CD8-positive, alpha-beta T cell (primary cell): ENCODE measurements at regions of chr6 and their contacts with region 1.

Region 1: DNA sequence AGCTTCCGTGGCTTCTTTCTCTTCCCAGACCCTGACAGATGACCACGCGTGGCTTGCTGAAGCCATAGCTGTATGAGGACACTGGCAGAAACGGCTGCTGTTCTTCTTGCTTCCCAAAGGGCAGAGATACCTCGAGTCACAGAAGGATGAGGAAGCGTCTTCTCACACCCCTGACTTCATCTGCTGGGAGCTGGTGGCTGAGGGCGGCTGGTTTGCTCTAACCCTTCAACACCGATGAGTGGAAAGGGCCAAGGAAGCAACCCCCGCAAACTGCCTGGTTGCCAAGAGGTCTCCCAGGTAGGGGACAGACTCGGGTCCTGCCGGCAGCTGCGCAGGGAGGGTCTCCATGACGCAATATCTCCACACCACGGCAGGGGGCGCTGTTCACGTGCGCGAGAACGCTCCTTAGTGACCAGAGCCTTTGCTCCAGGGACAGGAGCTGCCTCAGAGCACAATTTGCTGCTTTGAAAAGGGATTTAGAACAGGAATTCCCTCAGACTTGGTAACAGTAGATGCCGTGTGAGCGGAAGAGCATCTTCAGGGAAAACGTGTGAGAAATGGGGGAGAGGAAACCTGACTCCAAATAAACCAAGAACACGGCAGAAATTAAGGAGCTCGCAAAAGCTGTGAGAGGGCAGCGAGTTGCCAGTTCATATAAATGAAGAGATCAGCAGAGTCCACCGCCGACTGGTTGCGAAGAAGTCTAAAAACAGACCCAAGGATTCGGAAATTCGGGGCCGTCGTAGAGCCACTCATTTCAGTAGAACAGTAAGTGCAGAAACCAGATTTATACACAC is 80.2 kb downstream of the ERMARD start:
- DNase-seq: peak; percentile 40 to 83 (median 74)
- ATAC-seq: peak; percentile 63
- H3K4me3 ChIP-seq: no peak overlapping the region
- H3K4me3 Mint-ChIP-seq: no peak overlapping the region
- H3K27ac ChIP-seq: no peak overlapping the region
- H3K27ac Mint-ChIP-seq: no peak overlapping the region
- H3K4me1 ChIP-seq: no peaks in the 10 kb centered on the region
- H3K4me1 Mint-ChIP-seq: peaks cover 2% of the 10 kb centered on the region
- H3K27me3 ChIP-seq: peaks cover 0 to 11% of the 10 kb centered on the region in 2 experiments
- H3K27me3 Mint-ChIP-seq: peaks cover 44% of the 10 kb centered on the region
- CTCF ChIP-seq: peak; percentile 96

Region 2: DNA sequence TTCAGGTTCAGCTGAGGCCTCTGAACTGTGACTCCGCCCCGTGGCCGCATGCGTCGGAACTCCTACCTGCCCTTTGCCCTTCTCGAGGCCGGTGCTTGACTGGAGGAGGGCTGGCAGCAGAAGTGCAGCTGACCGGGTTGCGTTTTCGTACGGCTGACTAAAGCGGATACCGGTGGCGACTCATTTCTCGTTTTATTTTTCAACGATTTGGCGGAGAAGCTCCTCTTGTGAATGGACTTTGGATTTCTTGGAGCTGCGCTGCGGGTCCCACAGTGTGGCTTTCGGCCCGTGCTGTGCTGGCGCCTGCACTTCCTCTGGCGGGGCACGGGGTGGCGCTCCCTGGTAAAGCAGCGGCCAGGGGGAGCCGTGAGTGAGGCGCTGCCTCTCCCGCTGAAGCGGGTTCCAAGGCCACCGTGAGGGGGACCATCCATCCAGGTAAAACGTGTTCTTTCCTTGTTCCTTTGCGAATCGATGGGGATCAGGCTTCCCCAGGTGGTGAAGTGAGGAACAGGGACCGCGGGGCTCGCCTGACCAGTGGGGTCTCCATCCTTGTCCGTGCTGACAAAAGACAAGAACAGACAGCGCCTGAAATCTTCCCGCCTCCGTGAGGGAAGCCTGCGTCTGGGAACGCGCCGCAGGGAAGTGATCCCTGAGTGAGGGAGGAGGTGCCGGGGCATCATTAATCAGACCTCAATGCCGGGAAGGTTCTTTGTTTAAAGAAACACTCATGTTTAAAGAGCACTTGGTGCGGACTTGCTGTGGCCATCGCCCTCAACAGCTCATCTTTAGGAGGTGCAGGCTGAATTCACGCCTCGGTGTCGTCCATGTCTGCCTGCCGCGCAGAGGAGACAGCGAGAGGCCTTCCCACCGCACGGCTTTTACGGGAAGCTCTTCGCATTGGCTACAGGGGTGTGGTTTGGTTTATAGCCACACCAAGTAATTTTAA is 41.4 kb before region 1 on chr6:
- CTCF ChIA-PET with region 1: interaction called, 27 read pairs
- POLR2A ChIA-PET with region 1: interaction called, 3 read pairs
- intact Hi-C with region 1: loop called (anchors 1 kb)
- DNase-seq: peak; percentile 57 to 84 (median 73)
- ATAC-seq: peak; percentile 98
- H3K4me3 ChIP-seq: peak overlapping the region; percentile 46 to 58
- H3K4me3 Mint-ChIP-seq: peak overlapping the region; percentile 86
- H3K27ac ChIP-seq: no peak overlapping the region
- H3K27ac Mint-ChIP-seq: no peak overlapping the region
- H3K4me1 ChIP-seq: peaks cover 8% of the 10 kb centered on the region
- H3K4me1 Mint-ChIP-seq: peaks cover 16% of the 10 kb centered on the region
- H3K27me3 ChIP-seq: peaks cover 0 to 6% of the 10 kb centered on the region in 2 experiments
- H3K27me3 Mint-ChIP-seq: peaks cover 38% of the 10 kb centered on the region
- CTCF ChIP-seq: peak; percentile 93

Region 3: DNA sequence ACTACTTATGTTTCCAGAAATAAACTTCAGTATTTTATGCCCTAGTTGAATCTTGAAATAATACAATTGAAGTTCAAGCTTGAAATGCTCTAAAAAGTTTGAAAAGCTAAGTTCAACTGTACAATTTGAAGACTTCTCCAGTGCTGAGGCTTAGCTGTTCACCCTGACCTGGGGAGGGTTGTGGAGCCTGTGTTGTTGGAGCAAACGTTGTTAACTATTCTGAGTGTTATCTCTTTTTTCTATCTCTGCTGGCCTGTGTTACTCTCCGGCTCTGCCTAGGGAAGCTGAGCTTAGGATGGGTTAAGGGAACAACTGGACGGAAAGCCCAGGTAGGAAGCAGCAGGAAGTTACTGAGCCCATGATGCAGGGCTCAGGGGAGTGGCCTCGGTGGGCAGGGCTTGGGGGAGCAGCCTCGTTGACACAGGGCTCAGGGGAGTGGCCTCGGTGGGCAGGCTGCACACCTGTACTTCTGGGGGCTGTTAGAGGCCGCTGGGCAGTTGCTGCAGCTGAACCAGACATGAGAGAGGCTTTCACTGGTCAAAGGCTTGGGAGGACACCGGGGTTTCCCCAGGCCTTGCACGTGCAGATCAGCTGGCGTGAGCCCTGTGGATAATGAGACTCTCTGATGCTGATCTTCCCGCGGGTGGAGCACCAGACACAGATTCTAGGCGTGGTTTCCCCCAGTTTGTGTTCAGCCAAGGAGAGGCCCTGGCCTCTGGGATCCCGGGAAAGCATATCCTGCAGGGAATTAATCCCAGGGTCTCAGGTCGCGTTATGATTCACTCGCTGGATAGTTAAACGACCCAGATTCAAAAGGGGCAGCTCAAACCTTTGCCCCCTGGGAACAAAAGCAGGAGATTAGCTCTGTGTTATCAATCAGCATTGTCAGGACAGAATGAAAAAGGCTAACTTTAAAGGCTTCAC is 21.3 kb before region 1 on chr6:
- CTCF ChIA-PET with region 1: interaction called, 10 read pairs
- POLR2A ChIA-PET with region 1: no interaction called
- intact Hi-C with region 1: no loop called
- DNase-seq: no peak
- ATAC-seq: no peak
- H3K4me3 ChIP-seq: no peak overlapping the region
- H3K4me3 Mint-ChIP-seq: no peak overlapping the region
- H3K27ac ChIP-seq: no peak overlapping the region
- H3K27ac Mint-ChIP-seq: no peak overlapping the region
- H3K4me1 ChIP-seq: peaks cover 46% of the 10 kb centered on the region
- H3K4me1 Mint-ChIP-seq: peaks cover 43% of the 10 kb centered on the region
- H3K27me3 ChIP-seq: peaks cover 0 to 7% of the 10 kb centered on the region in 2 experiments
- H3K27me3 Mint-ChIP-seq: peaks cover 29% of the 10 kb centered on the region
- CTCF ChIP-seq: no peak

Region 4: DNA sequence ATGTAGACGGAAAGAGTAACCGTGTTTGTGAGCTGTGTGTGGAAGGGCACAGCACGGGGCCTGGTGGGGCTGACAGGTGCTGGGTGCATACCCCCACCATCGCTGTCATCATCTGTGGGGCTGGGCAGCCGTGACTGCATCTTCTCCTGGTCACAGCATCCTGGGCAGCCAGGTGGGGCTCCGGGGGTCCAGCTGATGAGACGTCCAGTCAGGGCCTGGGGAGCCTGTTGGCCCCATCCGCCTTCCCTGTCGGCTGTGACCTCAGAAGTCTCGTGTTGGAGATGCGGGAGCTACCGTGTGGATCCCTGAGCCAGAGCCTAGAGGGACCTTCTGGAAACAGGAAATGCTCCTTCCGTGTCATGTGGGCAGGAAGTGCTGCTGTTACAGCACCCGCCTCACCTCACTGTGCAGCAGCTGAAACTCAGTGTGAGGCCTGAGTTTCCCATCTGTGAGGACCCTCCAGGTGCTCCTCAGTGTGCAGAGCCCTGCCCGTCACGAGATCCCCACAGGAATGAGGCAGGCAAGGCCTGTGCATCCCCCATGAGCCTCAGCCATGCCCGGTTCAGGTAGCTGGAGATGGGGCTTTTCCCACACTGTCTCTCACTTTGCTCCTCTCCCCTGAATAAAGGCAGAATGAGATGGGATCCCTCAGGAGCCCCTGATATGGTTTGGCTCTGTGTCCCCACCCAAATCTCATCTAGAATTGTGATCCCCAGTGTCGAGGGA is 28.5 kb after region 1 on chr6:
- CTCF ChIA-PET with region 1: interaction called, 14 read pairs
- POLR2A ChIA-PET with region 1: no interaction called
- intact Hi-C with region 1: no loop called
- DNase-seq: peak in 1 of 9 experiments; percentile 48
- ATAC-seq: no peak
- H3K4me3 ChIP-seq: no peak overlapping the region
- H3K4me3 Mint-ChIP-seq: peak overlapping the region; percentile 38
- H3K27ac ChIP-seq: no peak overlapping the region
- H3K27ac Mint-ChIP-seq: no peak overlapping the region
- H3K4me1 ChIP-seq: peaks cover 8% of the 10 kb centered on the region
- H3K4me1 Mint-ChIP-seq: peaks cover 40% of the 10 kb centered on the region
- H3K27me3 ChIP-seq: no peaks in the 10 kb centered on the region
- H3K27me3 Mint-ChIP-seq: no peaks in the 10 kb centered on the region
- CTCF ChIP-seq: no peak

Region 5: GRCh38 chr6:169950558-169950957 is 118.9 kb after region 1 on chr6:
- CTCF ChIA-PET with region 1: interaction called, 19 read pairs
- POLR2A ChIA-PET with region 1: no interaction called
- intact Hi-C with region 1: no loop called
- DNase-seq: peak in 7 of 9 experiments; percentile 16 to 69 (median 51)
- ATAC-seq: peak; percentile 40
- H3K4me3 ChIP-seq: no peak overlapping the region
- H3K4me3 Mint-ChIP-seq: no peak overlapping the region
- H3K27ac ChIP-seq: no peak overlapping the region
- H3K27ac Mint-ChIP-seq: no peak overlapping the region
- H3K4me1 ChIP-seq: no peaks in the 10 kb centered on the region
- H3K4me1 Mint-ChIP-seq: no peaks in the 10 kb centered on the region
- H3K27me3 ChIP-seq: no peaks in the 10 kb centered on the region
- H3K27me3 Mint-ChIP-seq: no peaks in the 10 kb centered on the region
- CTCF ChIP-seq: peak; percentile 53

Region 6: DNA sequence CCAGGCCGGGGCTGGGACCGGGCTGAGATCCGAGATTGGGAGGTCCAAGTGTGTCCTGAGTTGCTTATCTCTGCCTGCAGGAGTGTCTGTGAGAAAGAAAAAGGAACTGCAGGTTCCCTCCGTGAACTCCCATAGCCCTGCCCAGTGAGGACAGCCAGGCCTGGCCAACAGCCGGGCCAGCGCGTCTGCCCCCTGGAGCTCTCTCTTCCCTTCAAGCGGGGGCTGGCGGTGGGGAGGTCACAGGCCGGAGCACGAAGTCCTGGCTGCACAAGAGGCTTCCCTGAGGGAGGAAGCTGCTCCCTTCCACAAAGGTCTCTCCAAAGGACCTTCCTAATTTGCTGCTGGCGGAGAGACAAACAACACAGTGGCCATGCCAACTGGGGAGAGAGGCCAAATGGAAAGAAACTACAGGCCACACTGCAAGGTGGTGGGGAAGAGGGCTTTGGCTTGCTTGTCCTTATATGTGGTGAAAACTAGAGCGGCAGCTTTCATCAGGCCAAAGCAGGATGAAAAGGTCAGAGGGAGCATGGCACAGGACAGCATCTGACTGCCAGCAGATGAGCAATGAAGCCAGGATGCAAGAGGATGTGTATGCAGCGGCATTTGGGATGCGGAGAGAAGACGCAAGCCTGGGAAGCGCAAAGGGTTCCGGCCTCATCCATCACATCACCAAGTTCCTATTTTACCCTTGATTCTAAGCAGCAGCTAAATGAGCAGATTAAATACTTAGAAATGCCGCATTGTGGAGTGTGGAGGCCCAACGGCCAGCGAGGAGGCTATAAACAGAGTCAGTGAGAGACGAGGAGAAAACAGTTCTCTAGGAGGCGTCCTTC is 179.8 kb after region 1 on chr6:
- CTCF ChIA-PET with region 1: no interaction called
- POLR2A ChIA-PET with region 1: no interaction called
- intact Hi-C with region 1: no loop called
- DNase-seq: no peak
- ATAC-seq: no peak
- H3K4me3 ChIP-seq: no peak overlapping the region
- H3K4me3 Mint-ChIP-seq: no peak overlapping the region
- H3K27ac ChIP-seq: no peak overlapping the region
- H3K27ac Mint-ChIP-seq: no peak overlapping the region
- H3K4me1 ChIP-seq: no peaks in the 10 kb centered on the region
- H3K4me1 Mint-ChIP-seq: no peaks in the 10 kb centered on the region
- H3K27me3 ChIP-seq: no peaks in the 10 kb centered on the region
- H3K27me3 Mint-ChIP-seq: peaks cover 10% of the 10 kb centered on the region
- CTCF ChIP-seq: no peak

Region 7: DNA sequence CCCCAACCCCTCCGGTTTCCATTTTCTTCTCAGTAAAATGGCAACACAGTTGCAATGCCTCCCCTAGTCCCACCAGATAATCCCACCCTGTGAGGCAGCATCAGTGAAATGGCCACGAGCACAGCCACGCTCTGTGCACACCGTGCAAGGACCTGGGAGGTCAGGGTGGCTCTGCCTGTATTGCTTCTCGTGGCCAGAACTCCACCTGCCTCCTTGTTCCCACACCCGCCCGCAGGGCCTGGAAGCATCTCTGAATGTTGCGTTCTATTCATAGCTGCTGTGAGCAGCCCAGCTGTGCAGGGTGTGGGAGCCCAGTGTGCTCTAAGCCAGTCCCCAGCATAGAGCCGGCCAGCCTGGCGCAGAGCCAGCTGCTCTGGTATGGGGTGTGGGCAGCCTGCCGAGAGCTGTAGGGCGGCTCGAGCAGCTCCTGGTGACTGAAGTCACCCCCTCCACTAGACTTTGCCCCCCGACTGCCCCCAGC is 298.1 kb after region 1 on chr6:
- CTCF ChIA-PET with region 1: no interaction called
- POLR2A ChIA-PET with region 1: no interaction called
- intact Hi-C with region 1: no loop called
- DNase-seq: peak in 1 of 9 experiments; percentile 7
- ATAC-seq: no peak
- H3K4me3 ChIP-seq: no peak overlapping the region
- H3K4me3 Mint-ChIP-seq: no peak overlapping the region
- H3K27ac ChIP-seq: no peak overlapping the region
- H3K27ac Mint-ChIP-seq: no peak overlapping the region
- H3K4me1 ChIP-seq: no peaks in the 10 kb centered on the region
- H3K4me1 Mint-ChIP-seq: no peaks in the 10 kb centered on the region
- H3K27me3 ChIP-seq: no peaks in the 10 kb centered on the region
- H3K27me3 Mint-ChIP-seq: peaks cover 2% of the 10 kb centered on the region
- CTCF ChIP-seq: no peak

Region 8: GRCh38 chr6:170295510-170296422 is 464.1 kb after region 1 on chr6:
- CTCF ChIA-PET with region 1: interaction called, 32 read pairs
- POLR2A ChIA-PET with region 1: no interaction called
- intact Hi-C with region 1: loop called in 1 of 2 experiments (anchors 1 kb)
- DNase-seq: peak in 4 of 9 experiments; percentile 39 to 68 (median 57)
- ATAC-seq: peak; percentile 46
- H3K4me3 ChIP-seq: peak overlapping the region; percentile 33 to 47
- H3K4me3 Mint-ChIP-seq: peak overlapping the region; percentile 73
- H3K27ac ChIP-seq: no peak overlapping the region
- H3K27ac Mint-ChIP-seq: no peak overlapping the region
- H3K4me1 ChIP-seq: peaks cover 46% of the 10 kb centered on the region
- H3K4me1 Mint-ChIP-seq: peaks cover 40% of the 10 kb centered on the region
- H3K27me3 ChIP-seq: peaks cover 8 to 37% of the 10 kb centered on the region in 2 experiments
- H3K27me3 Mint-ChIP-seq: peaks cover 42% of the 10 kb centered on the region
- CTCF ChIP-seq: no peak

Region 9: DNA sequence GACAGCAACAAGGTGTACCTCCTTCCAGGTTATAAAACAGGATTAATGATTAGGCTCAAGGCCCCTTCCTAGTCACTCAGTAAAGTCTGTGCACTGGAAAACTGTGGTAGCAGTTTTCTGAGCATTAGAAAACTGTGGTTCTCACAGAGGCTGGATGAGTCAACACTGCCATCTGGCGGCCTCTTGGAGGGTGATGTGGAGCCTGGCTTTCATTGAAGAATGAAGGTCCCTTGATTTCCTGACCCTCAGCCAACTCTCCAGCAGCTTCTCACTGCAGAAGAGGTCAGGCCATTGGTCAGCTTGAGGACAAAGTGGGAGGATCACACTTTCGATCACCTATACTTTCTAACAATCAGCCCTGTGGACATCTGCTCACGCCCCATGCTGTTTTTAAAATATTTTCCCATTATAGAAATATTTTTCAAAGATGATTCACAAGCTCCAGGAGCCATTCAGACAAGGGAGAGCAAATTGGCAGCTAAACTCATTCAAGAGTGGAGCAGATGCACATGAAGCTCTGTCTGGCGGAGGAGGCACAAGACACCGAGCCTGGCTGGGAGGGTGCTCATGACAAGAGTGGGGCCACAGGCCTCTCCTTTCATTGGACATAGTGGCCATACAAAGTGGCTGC is 698.3 kb after region 1 on chr6:
- CTCF ChIA-PET with region 1: interaction called, 21 read pairs
- POLR2A ChIA-PET with region 1: interaction called, 3 read pairs
- intact Hi-C with region 1: loop called (anchors 1 to 2 kb)
- DNase-seq: peak; percentile 39 to 77 (median 69)
- ATAC-seq: peak; percentile 77
- H3K4me3 ChIP-seq: no peak overlapping the region
- H3K4me3 Mint-ChIP-seq: no peak overlapping the region
- H3K27ac ChIP-seq: no peak overlapping the region
- H3K27ac Mint-ChIP-seq: no peak overlapping the region
- H3K4me1 ChIP-seq: no peaks in the 10 kb centered on the region
- H3K4me1 Mint-ChIP-seq: peaks cover 2% of the 10 kb centered on the region
- H3K27me3 ChIP-seq: no peaks in the 10 kb centered on the region
- H3K27me3 Mint-ChIP-seq: no peaks in the 10 kb centered on the region
- CTCF ChIP-seq: peak; percentile 84